ENCODE measurements at regions of chr12 and their contacts with region 1.

Region 1: GRCh38 chr12:132523576-132524331 is 33.8 kb downstream of the FBRSL1 start:
- DNase-seq: peak; percentile 74 to 89 (median 82)
- H3K4me3 ChIP-seq: no peak overlapping the region
- H3K27ac ChIP-seq: peak overlapping the region in 53 of 59 donors; percentile 3 to 90 (median 69)
- H3K27me3 ChIP-seq: no peaks in the 10 kb centered on the region
- CTCF ChIP-seq: peak; percentile 58 to 95 (median 90)

Region 2: GRCh38 chr12:132414634-132415326 is 109.0 kb before region 1 on chr12:
- intact Hi-C with region 1: loop called (anchors 1 to 2 kb)
- DNase-seq: peak in 9 of 10 donors; percentile 55 to 87 (median 72)
- H3K4me3 ChIP-seq: peak overlapping the region in 5 of 59 donors; percentile 5 to 31 (median 20)
- H3K27ac ChIP-seq: no peak overlapping the region
- H3K27me3 ChIP-seq: peaks cover 0 to 55% (median 30%) of the 10 kb centered on the region in 45 donors
- CTCF ChIP-seq: peak; percentile 52 to 99 (median 93)

Region 3: GRCh38 chr12:132489602-132490239 is 34.0 kb before region 1 on chr12 and contains the start of gene FBRSL1:
- intact Hi-C with region 1: loop called in 1 of 2 experiments (anchors 5 kb)
- DNase-seq: peak; percentile 83 to 90 (median 88)
- H3K4me3 ChIP-seq: peak within 1 kb of the TSS; percentile 55 to 86 (median 76)
- H3K27ac ChIP-seq: peak within 1 kb of the TSS in 55 of 59 donors; percentile 20 to 89 (median 78)
- H3K27me3 ChIP-seq: no peaks in the 10 kb centered on the region
- CTCF ChIP-seq: no peak
- total RNA-seq, gene FBRSL1: 41.4 to 125 (median 65.3) TPM

Region 4: GRCh38 chr12:132566516-132567131 is 42.9 kb after region 1 on chr12:
- intact Hi-C with region 1: loop called in 1 of 2 experiments (anchors 5 kb)
- DNase-seq: peak in 9 of 10 donors; percentile 45 to 81 (median 64)
- H3K4me3 ChIP-seq: no peak overlapping the region
- H3K27ac ChIP-seq: peak overlapping the region in 32 of 59 donors; percentile 0 to 82 (median 46)
- H3K27me3 ChIP-seq: no peaks in the 10 kb centered on the region
- CTCF ChIP-seq: peak in 2 of 56 donors; percentile 10 to 12

Measured in dorsolateral prefrontal cortex (tissue), 120 donors.